Activated T-helper 2 cell treated with anti-CD3 and anti-CD28 coated beads, Interferon-gamma antibody, Interleukin-2, Interleukin-4, amounts not matched to agents 10 μg/mL and 5 μg/mL and 100 μg/mL, durations not matched to agents 14 hours and 24 hours and 36 hours (primary cell): ENCODE measurements at regions of chr6 and their contacts with region 1.

Region 1: DNA sequence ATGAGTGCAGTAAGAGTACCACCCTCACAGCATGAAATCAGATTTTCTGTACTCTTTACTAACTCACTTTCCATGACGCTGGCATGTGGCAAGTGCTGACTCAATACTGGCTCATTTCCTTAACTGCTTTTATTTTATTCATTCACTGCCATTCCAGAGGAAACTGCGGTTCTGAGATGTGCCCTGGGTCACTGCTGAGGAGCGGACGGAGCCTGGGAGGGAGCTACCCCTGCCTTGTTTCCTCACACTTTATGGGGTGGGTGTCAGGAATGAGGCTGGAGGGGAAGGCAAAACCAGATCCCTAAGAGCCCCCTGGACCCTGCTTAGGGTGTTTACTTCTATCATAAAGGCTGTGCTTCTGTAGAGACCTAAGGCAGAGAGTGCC is 14.4 kb downstream of the NT5E start:
- DNase-seq: no peak
- H3K4me3 Mint-ChIP-seq: peak overlapping the region; percentile 50
- H3K27ac Mint-ChIP-seq: peak overlapping the region; percentile 93
- H3K4me1 Mint-ChIP-seq: peaks cover 69% of the 10 kb centered on the region
- H3K27me3 Mint-ChIP-seq: no peaks in the 10 kb centered on the region

Region 2: DNA sequence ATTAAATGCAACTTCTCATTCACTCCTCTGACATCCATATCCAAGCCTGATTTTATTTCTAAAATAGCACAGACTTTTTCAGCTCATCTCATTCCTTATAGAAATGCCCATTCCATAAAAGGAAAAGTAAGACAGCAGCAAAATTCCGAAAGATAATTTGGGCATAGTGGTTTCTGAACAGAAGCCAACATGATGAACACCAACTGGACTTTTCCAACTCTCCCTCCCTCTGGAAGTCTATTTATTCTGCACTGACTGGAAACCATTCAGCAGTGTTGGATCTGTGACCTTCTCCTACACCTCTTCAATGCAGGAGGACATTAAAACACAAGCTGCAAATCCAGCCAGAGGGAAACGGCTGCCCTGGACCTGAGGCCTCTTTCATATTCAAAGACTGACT is 320.6 kb before region 1 on chr6:
- intact Hi-C with region 1: no loop called
- DNase-seq: no peak
- H3K4me3 Mint-ChIP-seq: no peak overlapping the region
- H3K27ac Mint-ChIP-seq: no peak overlapping the region
- H3K4me1 Mint-ChIP-seq: no peaks in the 10 kb centered on the region
- H3K27me3 Mint-ChIP-seq: no peaks in the 10 kb centered on the region

Region 3: DNA sequence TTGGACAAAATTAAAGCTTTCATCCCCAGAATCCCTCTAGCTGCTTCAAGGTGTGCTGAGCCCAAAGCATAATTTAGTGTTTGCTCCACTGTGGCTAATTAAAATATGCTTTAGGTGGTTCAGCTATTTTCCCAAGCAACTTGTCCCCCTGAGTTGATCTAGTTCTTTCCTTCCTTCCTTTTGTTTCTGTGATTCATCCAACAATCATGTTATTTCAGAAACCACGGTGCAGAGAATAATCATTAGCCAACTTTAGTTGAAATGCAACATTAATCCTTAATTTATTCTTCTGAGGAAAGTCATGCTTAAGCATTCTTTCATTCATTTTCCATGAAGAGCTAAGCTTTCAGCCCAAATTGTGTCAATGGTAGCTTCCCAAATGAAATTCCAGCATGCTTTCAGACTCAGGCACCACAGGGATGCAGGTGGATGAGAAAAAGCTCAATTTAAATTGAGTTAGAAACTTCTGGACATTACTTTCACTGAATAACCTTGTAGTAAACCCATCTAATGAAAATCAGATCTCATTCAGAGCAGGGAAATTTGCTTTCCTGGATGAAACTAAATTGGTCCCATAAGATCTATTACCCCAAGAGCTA is 223.4 kb before region 1 on chr6:
- intact Hi-C with region 1: no loop called
- DNase-seq: no peak
- H3K4me3 Mint-ChIP-seq: no peak overlapping the region
- H3K27ac Mint-ChIP-seq: no peak overlapping the region
- H3K4me1 Mint-ChIP-seq: no peaks in the 10 kb centered on the region
- H3K27me3 Mint-ChIP-seq: no peaks in the 10 kb centered on the region

Region 4: GRCh38 chr6:85416049-85416448 is 48.2 kb before region 1 on chr6:
- intact Hi-C with region 1: loop called (anchors 1 kb)
- DNase-seq: no peak
- H3K4me3 Mint-ChIP-seq: no peak overlapping the region
- H3K27ac Mint-ChIP-seq: peak overlapping the region; percentile 21
- H3K4me1 Mint-ChIP-seq: peaks cover 36% of the 10 kb centered on the region
- H3K27me3 Mint-ChIP-seq: peaks cover 5% of the 10 kb centered on the region

Region 5: DNA sequence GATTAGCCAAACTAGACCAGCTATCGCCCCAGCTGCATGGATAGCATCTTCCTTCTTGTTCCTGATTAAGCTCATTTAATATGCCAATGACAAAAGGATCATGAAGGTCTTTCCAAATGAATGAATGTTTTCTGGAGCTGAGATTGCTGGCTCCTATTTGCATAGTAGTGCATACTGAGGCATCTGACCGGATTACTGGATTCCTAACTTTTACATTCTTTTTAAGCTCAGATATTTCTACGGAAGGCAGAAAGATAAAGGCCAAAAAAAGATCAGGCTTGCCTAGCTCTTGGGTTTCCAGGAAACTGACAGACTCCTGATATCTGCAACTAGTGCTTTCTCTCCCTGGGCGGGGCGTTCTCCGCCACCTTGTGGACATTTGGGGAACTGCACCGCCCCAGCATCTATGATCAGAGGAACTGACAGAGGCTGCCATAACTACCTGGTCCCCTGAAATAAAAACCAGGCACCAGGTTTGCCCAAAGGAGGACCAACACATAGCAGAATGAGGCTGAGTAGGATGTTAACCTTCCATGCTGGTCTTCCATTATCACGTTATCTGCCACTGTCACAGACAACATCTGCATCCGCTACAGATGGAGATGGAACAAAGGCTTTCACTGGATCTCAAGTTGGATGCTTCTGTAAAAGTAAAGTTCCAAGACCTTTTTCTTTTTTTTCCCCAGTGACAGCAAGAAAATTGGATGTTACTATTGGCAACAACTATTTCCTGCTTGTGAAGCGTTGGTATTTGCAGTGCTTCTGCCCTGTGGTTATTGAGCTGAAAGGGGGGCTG is 18.9 kb after region 1 on chr6:
- intact Hi-C with region 1: loop called (anchors 1 kb)
- DNase-seq: peak; percentile 74
- H3K4me3 Mint-ChIP-seq: no peak overlapping the region
- H3K27ac Mint-ChIP-seq: peak overlapping the region; percentile 58
- H3K4me1 Mint-ChIP-seq: peaks cover 12% of the 10 kb centered on the region
- H3K27me3 Mint-ChIP-seq: no peaks in the 10 kb centered on the region

Region 6: GRCh38 chr6:85506441-85507093 is 42.3 kb after region 1 on chr6:
- intact Hi-C with region 1: no loop called
- DNase-seq: no peak
- H3K4me3 Mint-ChIP-seq: no peak overlapping the region
- H3K27ac Mint-ChIP-seq: peak overlapping the region; percentile 22
- H3K4me1 Mint-ChIP-seq: peaks cover 6% of the 10 kb centered on the region
- H3K27me3 Mint-ChIP-seq: no peaks in the 10 kb centered on the region

Region 7: DNA sequence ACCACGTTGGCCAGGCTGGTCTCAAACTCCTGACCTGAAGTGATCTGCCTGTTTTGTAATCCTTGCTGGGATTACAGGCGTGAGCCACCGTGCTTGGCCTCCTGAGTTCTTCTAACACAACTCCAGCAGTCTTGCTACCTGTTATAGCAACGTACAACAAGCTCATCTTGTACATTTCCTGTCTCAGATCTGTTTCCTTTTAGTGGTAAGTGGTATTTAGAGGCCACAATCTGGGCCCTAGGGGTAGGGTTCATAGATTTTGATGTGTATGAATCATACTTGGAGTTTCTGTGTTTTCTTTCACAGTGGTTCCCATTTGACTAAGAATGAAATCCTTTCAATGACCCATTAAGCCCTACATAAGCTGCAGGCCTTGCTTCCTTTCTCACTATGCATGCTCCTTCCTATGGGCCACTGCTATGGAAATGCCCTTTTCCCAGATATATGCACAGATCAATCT is 205.5 kb after region 1 on chr6:
- intact Hi-C with region 1: loop called (anchors 1 kb)
- DNase-seq: peak; percentile 52
- H3K4me3 Mint-ChIP-seq: peak overlapping the region; percentile 61
- H3K27ac Mint-ChIP-seq: peak overlapping the region; percentile 78
- H3K4me1 Mint-ChIP-seq: peaks cover 55% of the 10 kb centered on the region
- H3K27me3 Mint-ChIP-seq: no peaks in the 10 kb centered on the region